ENCODE measurements at regions of chr15 and their contacts with region 1.

Region 1: GRCh38 chr15:63504247-63504978 is at the start of gene USP3:
- DNase-seq: peak; percentile 94
- H3K4me3 Mint-ChIP-seq: peak within 1 kb of the TSS; percentile 94
- H3K27ac Mint-ChIP-seq: peak within 1 kb of the TSS; percentile 95
- H3K4me1 Mint-ChIP-seq: peaks cover 82% of the 10 kb centered on the region
- H3K27me3 Mint-ChIP-seq: no peaks in the 10 kb centered on the region
- total RNA-seq, gene USP3: 67.9 to 68.7 TPM

Region 2: DNA sequence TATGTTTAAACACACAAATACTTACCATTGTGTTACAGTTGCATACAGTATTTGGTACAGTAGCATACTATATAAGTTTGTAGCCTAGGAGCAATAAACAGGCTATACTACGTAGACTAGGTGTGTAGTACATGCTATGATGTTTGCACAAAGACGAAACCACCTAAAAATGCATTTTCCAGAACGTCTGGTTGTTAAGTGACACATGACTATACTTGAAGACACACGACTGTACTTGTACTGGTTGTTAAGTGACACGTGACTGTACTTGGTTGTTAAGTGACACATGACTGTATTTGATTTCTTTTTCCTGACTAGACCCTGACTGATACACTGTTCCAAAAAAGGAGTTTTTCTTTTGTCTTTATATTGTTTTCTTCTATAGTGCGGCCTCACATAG is 280.9 kb before region 1 on chr15:
- CTCF ChIA-PET with region 1: no interaction called
- POLR2A ChIA-PET with region 1: no interaction called
- DNase-seq: no peak
- H3K4me3 Mint-ChIP-seq: no peak overlapping the region
- H3K27ac Mint-ChIP-seq: no peak overlapping the region
- H3K4me1 Mint-ChIP-seq: peaks cover 35% of the 10 kb centered on the region
- H3K27me3 Mint-ChIP-seq: no peaks in the 10 kb centered on the region

Region 3: DNA sequence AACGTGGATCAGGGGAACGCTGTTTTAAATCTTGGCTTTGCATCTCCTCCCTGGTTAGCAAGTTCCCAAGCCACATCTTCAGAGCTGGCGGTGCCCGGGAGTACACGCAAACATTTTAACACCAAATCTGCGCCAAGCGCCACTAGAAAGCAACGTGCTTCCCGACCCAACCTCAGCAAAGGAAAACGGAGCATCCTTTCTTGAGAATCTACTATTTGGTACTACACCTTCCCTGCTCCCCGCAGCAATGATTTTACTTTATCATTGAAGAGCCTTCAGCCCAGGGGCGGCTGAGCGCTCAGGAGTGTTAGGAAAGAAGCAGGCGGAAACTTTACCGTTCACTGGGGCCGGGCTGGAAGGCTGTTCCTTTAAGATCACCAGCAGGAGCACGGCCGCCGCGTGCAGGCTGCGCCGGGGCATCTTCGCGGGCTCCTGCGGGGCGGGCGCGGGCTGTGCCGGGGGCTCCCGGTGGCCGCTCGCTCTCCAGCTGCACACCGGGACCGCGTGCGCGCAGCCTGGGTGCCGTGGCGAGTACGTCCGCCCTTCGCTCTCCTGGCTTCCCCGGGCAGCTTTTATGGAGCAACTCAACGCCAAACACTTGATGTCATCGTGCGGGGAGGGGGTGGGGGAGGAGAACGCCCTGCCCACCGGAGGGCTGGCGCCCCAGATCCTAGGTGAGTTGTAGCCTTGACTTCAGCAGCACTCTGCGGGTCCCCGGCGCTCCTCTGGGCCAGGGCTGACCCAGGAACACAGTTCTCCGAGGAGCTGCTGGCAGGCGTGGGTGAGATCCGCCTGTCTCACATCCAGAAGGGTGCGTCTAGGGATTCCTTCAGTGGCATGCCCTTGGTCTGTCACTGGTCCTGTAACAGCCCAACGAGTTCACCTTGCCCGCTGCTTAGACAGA is 122.9 kb before region 1 on chr15 and contains the start of gene CA12:
- CTCF ChIA-PET with region 1: no interaction called
- POLR2A ChIA-PET with region 1: no interaction called
- DNase-seq: no peak
- H3K4me3 Mint-ChIP-seq: peak within 1 kb of the TSS; percentile 61
- H3K27ac Mint-ChIP-seq: no peak within 1 kb of the TSS
- H3K4me1 Mint-ChIP-seq: peaks cover 19% of the 10 kb centered on the region
- H3K27me3 Mint-ChIP-seq: peaks cover 69% of the 10 kb centered on the region
- total RNA-seq, gene CA12: 0.20 TPM in 1 of 2 experiments, not detected in the other

Region 4: GRCh38 chr15:63473999-63474809 is 30.2 kb before region 1 on chr15:
- CTCF ChIA-PET with region 1: interaction called, 50 read pairs
- POLR2A ChIA-PET with region 1: interaction called, 175 read pairs
- DNase-seq: peak; percentile 26
- H3K4me3 Mint-ChIP-seq: no peak overlapping the region
- H3K27ac Mint-ChIP-seq: peak overlapping the region; percentile 19
- H3K4me1 Mint-ChIP-seq: peaks cover 29% of the 10 kb centered on the region
- H3K27me3 Mint-ChIP-seq: no peaks in the 10 kb centered on the region

Region 5: DNA sequence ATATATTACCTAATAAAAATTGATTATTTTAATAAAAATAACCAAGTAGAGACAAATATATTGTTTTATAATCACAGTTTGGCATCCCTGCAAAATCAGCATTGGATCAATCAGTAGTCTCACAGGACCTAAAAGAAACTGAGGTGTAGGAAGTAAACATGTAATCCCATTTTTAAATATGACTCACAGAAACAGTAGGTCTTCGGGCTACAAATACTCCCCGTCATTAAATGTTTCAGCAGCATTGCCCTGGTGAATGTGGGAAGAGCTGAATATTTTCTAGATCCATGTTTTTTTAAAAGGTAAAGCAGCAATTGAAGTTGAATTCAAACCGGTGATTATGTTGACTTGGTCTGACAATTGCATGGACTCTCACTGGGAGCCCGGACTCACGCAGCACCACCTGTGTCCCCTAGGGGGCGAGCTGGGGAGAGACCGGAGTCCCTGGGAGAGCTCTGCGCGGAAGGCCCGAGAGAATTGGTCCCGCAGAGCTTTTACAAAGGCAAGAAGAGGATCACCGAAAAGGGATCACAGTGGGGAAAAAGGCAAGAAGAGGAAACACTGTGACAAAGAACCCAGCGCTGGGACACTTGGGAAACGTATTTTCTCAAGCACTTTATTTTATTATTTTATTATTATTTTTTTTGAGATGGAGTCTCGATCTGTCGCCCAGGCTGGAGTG is 17.2 kb before region 1 on chr15:
- CTCF ChIA-PET with region 1: interaction called, 56 read pairs
- POLR2A ChIA-PET with region 1: interaction called, 175 read pairs
- DNase-seq: peak; percentile 90
- H3K4me3 Mint-ChIP-seq: peak overlapping the region; percentile 12
- H3K27ac Mint-ChIP-seq: peak overlapping the region; percentile 10
- H3K4me1 Mint-ChIP-seq: peaks cover 57% of the 10 kb centered on the region
- H3K27me3 Mint-ChIP-seq: peaks cover 2% of the 10 kb centered on the region

Region 6: DNA sequence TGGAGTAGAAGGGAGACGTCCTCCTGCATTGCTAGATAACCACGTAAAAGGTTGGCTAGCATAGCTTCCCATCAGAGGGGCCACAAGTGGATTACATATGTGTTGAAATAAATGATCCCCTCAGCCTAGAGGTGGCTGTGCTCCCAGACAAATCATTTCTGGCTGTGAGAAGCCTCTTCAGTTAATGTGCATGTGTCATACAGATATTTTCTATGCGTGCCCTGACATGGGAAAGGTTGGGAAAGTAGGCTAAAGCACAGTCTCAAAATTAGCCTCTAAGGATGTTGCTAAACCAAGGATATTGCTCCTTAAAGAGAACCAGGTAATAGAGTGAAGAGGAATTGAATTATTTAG is 17.8 kb after region 1 on chr15:
- CTCF ChIA-PET with region 1: interaction called, 11 read pairs
- POLR2A ChIA-PET with region 1: interaction called, 18 read pairs
- DNase-seq: no peak
- H3K4me3 Mint-ChIP-seq: no peak overlapping the region
- H3K27ac Mint-ChIP-seq: no peak overlapping the region
- H3K4me1 Mint-ChIP-seq: peaks cover 47% of the 10 kb centered on the region
- H3K27me3 Mint-ChIP-seq: no peaks in the 10 kb centered on the region

Region 7: GRCh38 chr15:63600616-63601025 is 96.2 kb after region 1 on chr15:
- CTCF ChIA-PET with region 1: interaction called, 19 read pairs
- POLR2A ChIA-PET with region 1: interaction called, 54 read pairs
- DNase-seq: peak; percentile 91
- H3K4me3 Mint-ChIP-seq: peak overlapping the region; percentile 89
- H3K27ac Mint-ChIP-seq: peak overlapping the region; percentile 87
- H3K4me1 Mint-ChIP-seq: peaks cover 56% of the 10 kb centered on the region
- H3K27me3 Mint-ChIP-seq: no peaks in the 10 kb centered on the region